ENCODE measurements at regions of chr16 and their contacts with region 1.

Region 1: DNA sequence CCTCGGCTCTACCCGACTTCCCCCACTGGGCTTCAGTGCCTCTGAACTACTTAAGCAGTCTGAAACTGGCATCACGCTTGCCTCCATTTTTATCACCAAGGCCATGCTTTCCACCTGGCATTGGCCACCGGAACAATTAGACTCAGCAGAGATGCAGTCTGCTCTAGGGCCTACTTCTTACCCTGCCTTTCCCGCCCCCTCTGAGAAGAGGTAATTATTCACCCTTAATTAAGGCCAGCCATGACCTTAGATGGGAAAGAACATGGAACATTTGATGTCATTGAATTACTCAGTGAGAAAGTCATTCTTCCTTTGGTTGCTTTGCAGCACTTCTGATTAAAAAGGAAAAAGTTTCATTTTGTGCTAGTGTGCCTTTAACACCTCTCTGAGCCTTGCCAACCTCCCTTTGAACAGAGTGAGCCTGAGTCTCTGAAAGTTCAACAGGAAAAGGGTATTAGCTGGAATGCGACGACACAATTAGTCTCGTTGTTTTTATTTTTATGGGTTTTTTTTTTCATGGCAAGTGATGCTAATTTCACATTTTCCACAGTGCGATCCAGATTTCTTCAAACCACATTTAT is 60.9 kb upstream of the TNRC6A start:
- DNase-seq: peak; percentile 78
- H3K4me3 Mint-ChIP-seq: peak overlapping the region; percentile 64
- H3K27ac Mint-ChIP-seq: peak overlapping the region; percentile 90
- H3K4me1 Mint-ChIP-seq: peaks cover 51% of the 10 kb centered on the region
- H3K27me3 Mint-ChIP-seq: peaks cover 8% of the 10 kb centered on the region

Region 2: GRCh38 chr16:24504472-24505345 is 163.9 kb before region 1 on chr16:
- CTCF ChIA-PET with region 1: no interaction called
- POLR2A ChIA-PET with region 1: no interaction called
- intact Hi-C with region 1: no loop called
- DNase-seq: peak; percentile 67
- H3K4me3 Mint-ChIP-seq: no peak overlapping the region
- H3K27ac Mint-ChIP-seq: no peak overlapping the region
- H3K4me1 Mint-ChIP-seq: no peaks in the 10 kb centered on the region
- H3K27me3 Mint-ChIP-seq: peaks cover 6% of the 10 kb centered on the region

Region 3: DNA sequence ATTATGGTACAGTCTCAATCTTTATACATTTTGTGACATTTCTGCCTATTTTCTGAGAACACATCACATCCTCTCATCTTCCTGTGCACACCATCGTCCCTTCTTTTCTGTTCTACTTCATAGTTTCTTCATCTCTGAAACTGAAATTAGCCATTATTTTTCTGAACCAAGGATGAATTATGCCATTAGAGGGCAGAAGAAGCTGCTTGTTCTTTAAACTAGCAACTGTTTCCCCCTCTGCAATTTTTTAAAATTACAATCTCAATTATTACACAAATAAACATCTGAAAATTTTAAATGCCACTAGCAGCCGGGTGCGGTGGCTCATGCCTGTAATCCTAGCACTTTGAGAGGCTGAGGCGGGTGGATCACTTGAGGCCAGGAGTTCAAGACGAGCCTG is 87.9 kb before region 1 on chr16:
- CTCF ChIA-PET with region 1: no interaction called
- POLR2A ChIA-PET with region 1: no interaction called
- intact Hi-C with region 1: loop called (anchors 1 kb)
- DNase-seq: no peak
- H3K4me3 Mint-ChIP-seq: no peak overlapping the region
- H3K27ac Mint-ChIP-seq: no peak overlapping the region
- H3K4me1 Mint-ChIP-seq: peaks cover 5% of the 10 kb centered on the region
- H3K27me3 Mint-ChIP-seq: peaks cover 3% of the 10 kb centered on the region

Region 4: DNA sequence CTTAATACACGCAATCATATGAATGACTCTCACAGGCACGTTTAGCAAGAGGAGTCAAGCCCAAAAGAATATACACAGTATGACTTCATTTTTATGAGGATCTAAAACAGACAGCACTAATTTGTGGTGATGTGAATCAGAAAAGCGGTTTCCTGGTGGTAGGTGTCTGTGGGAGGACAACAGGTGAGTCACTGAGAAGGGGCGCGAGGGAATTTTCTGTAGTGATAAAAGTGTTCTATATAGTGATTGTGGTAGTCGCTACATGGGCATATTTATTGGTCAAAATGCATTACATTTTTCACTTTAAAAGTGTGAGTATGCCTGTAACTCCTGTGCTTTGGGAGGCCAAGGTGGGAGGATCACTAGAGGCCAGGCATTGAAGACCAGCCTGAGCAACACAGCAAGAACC is 53.3 kb after region 1 on chr16:
- CTCF ChIA-PET with region 1: interaction called, 3 read pairs
- POLR2A ChIA-PET with region 1: no interaction called
- intact Hi-C with region 1: loop called (anchors 1 kb)
- DNase-seq: peak; percentile 86
- H3K4me3 Mint-ChIP-seq: peak overlapping the region; percentile 14
- H3K27ac Mint-ChIP-seq: peak overlapping the region; percentile 48
- H3K4me1 Mint-ChIP-seq: peaks cover 38% of the 10 kb centered on the region
- H3K27me3 Mint-ChIP-seq: peaks cover 6% of the 10 kb centered on the region

Region 5: DNA sequence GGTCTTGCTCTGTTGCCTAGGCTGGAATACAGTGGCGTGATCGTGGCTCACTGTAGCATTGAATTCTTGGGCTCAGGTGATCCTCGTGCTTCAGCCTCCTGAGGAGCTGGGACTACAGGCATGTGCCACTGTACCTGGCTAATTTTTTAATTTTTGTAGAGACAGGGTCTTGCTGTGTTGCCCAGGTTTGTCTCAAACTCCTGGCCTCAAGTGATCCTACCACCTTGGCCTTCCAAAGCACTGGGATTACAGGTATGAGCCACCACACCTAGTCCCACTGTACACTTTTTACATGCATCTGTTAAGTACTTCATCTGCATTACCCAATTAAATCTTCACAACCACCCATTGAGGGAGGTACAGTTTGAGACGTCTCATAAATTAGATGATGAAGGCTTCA is 73.3 kb after region 1 on chr16:
- CTCF ChIA-PET with region 1: no interaction called
- POLR2A ChIA-PET with region 1: no interaction called
- intact Hi-C with region 1: no loop called
- DNase-seq: no peak
- H3K4me3 Mint-ChIP-seq: no peak overlapping the region
- H3K27ac Mint-ChIP-seq: no peak overlapping the region
- H3K4me1 Mint-ChIP-seq: peaks cover 80% of the 10 kb centered on the region
- H3K27me3 Mint-ChIP-seq: no peaks in the 10 kb centered on the region

Region 6: DNA sequence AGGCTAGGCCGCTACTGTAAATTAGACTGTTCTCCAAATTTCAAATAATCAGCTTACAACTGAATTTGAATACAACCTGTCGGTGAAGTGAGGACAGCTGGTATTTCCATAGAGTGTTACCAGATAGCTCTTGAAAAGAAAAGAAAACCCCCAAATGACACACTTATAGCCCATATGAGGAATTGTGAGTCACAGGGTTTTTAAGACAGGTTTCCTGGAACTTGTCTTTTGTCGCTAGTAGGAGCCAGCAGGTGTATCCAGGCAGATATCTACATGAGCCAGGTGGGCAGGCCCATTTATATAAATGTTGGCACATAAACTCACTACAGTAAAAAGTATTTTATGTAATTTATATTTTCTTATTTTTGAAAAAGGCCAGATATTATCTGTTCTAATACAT is 84.9 kb after region 1 on chr16:
- CTCF ChIA-PET with region 1: no interaction called
- POLR2A ChIA-PET with region 1: interaction called, 5 read pairs
- intact Hi-C with region 1: loop called (anchors 2 kb)
- DNase-seq: peak; percentile 42
- H3K4me3 Mint-ChIP-seq: no peak overlapping the region
- H3K27ac Mint-ChIP-seq: peak overlapping the region; percentile 86
- H3K4me1 Mint-ChIP-seq: peaks cover 62% of the 10 kb centered on the region
- H3K27me3 Mint-ChIP-seq: no peaks in the 10 kb centered on the region

Region 7: GRCh38 chr16:24850289-24850938 is 181.8 kb after region 1 on chr16:
- CTCF ChIA-PET with region 1: interaction called, 4 read pairs
- POLR2A ChIA-PET with region 1: no interaction called
- intact Hi-C with region 1: loop called (anchors 2 kb)
- DNase-seq: peak; percentile 53
- H3K4me3 Mint-ChIP-seq: no peak overlapping the region
- H3K27ac Mint-ChIP-seq: no peak overlapping the region
- H3K4me1 Mint-ChIP-seq: peaks cover 21% of the 10 kb centered on the region
- H3K27me3 Mint-ChIP-seq: no peaks in the 10 kb centered on the region

Measured in activated CD4-positive, alpha-beta memory T cell treated with anti-CD3 and anti-CD28 coated beads for 36 hours (primary cell).